Cardiac septum (tissue), 1 donor: ENCODE measurements at regions of chr9 and their contacts with region 1.

Region 1: GRCh38 chr9:84343111-84343521 is 2.6 kb upstream of the SLC28A3 start:
- DNase-seq: no peak

Region 2: GRCh38 chr9:84379740-84380139 is 36.6 kb after region 1 on chr9:
- intact Hi-C with region 1: loop called (anchors 5 kb)
- DNase-seq: no peak